CD8-positive, alpha-beta T cell (primary cell): ENCODE measurements at regions of chr2 and their contacts with region 1.

Region 1: GRCh38 chr2:37414470-37414949 is 70.1 kb downstream of the QPCT start:
- DNase-seq: peak in 2 of 9 experiments; percentile 60 to 69
- ATAC-seq: peak; percentile 57
- H3K4me3 ChIP-seq: no peak overlapping the region
- H3K4me3 Mint-ChIP-seq: no peak overlapping the region
- H3K27ac ChIP-seq: no peak overlapping the region
- H3K27ac Mint-ChIP-seq: no peak overlapping the region
- H3K4me1 ChIP-seq: no peaks in the 10 kb centered on the region
- H3K4me1 Mint-ChIP-seq: peaks cover 15% of the 10 kb centered on the region
- H3K27me3 ChIP-seq: no peaks in the 10 kb centered on the region
- H3K27me3 Mint-ChIP-seq: peaks cover 3% of the 10 kb centered on the region
- CTCF ChIP-seq: peak; percentile 94

Region 2: DNA sequence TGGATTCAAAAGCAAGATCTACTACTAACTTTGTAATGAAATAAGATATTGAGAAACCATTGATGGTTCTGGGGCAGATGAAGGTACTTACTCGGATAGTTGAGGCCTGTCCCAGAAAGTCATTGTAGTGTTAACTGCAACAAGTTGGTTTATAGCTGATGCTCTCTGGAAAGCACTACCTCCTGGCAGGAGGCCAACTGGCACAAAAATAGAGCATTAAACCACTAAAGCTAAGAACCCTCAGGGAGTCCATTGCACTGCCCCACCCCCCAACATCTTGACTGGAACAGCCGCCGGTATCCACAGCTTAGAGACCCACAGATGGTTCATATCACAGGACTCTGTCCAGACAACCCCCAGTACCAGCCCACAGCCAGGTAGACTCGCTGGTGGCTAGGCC is 1611.4 kb before region 1 on chr2:
- CTCF ChIA-PET with region 1: no interaction called
- POLR2A ChIA-PET with region 1: no interaction called
- intact Hi-C with region 1: no loop called
- DNase-seq: no peak
- ATAC-seq: no peak
- H3K4me3 ChIP-seq: no peak overlapping the region
- H3K4me3 Mint-ChIP-seq: no peak overlapping the region
- H3K27ac ChIP-seq: no peak overlapping the region
- H3K27ac Mint-ChIP-seq: no peak overlapping the region
- H3K4me1 ChIP-seq: no peaks in the 10 kb centered on the region
- H3K4me1 Mint-ChIP-seq: no peaks in the 10 kb centered on the region
- H3K27me3 ChIP-seq: no peaks in the 10 kb centered on the region
- H3K27me3 Mint-ChIP-seq: peaks cover 2% of the 10 kb centered on the region
- CTCF ChIP-seq: no peak

Region 3: GRCh38 chr2:37529830-37530415 is 115.4 kb after region 1 on chr2:
- CTCF ChIA-PET with region 1: interaction called, 17 read pairs
- POLR2A ChIA-PET with region 1: no interaction called
- intact Hi-C with region 1: no loop called
- DNase-seq: no peak
- ATAC-seq: no peak
- H3K4me3 ChIP-seq: no peak overlapping the region
- H3K4me3 Mint-ChIP-seq: no peak overlapping the region
- H3K27ac ChIP-seq: no peak overlapping the region
- H3K27ac Mint-ChIP-seq: no peak overlapping the region
- H3K4me1 ChIP-seq: no peaks in the 10 kb centered on the region
- H3K4me1 Mint-ChIP-seq: no peaks in the 10 kb centered on the region
- H3K27me3 ChIP-seq: no peaks in the 10 kb centered on the region
- H3K27me3 Mint-ChIP-seq: no peaks in the 10 kb centered on the region
- CTCF ChIP-seq: no peak

Region 4: DNA sequence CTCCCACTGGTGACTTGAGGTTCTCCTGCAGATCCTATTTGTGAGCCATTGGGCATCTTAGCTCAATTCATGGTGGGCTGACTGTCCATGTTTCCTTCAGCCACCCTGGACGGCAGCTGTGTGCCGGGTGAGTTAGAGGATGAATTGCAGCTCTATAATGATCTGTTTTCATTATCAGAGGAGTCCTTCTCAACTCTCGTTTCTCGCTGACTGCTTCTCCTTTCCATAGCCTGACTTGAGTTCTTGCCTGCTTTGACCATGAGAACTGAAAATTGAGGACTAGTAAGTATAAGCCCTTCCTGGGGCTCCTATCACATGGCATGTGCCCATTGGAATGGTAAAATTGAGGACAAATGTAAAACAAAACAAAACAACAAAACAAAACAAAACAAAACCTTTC is 135.1 kb after region 1 on chr2:
- CTCF ChIA-PET with region 1: interaction called, 29 read pairs
- POLR2A ChIA-PET with region 1: interaction called, 3 read pairs
- intact Hi-C with region 1: loop called in 1 of 2 experiments (anchors 10 kb)
- DNase-seq: no peak
- ATAC-seq: no peak
- H3K4me3 ChIP-seq: no peak overlapping the region
- H3K4me3 Mint-ChIP-seq: no peak overlapping the region
- H3K27ac ChIP-seq: no peak overlapping the region
- H3K27ac Mint-ChIP-seq: no peak overlapping the region
- H3K4me1 ChIP-seq: no peaks in the 10 kb centered on the region
- H3K4me1 Mint-ChIP-seq: peaks cover 16% of the 10 kb centered on the region
- H3K27me3 ChIP-seq: no peaks in the 10 kb centered on the region
- H3K27me3 Mint-ChIP-seq: no peaks in the 10 kb centered on the region
- CTCF ChIP-seq: no peak

Region 5: DNA sequence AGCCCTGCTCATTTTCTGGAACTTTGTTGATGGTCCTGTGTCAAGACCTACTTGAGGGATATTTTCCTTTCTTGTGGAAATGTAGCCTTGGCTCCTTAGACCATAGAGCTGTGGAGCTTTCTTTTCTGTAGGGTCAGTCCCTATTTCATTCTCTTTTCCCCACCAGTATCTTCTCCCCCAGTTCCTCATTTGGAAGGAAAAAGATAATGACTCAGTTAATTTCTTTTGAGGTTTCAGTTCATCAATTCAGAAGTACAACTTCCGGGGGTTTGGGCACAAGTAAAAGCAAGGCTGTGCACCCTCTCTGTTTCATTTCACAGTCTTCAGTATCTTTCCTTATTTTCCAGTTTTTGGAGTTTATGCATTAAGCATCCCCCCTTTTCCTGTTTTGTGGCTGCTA is 186.2 kb after region 1 on chr2:
- CTCF ChIA-PET with region 1: interaction called, 17 read pairs
- POLR2A ChIA-PET with region 1: interaction called, 3 read pairs
- intact Hi-C with region 1: no loop called
- DNase-seq: peak in 1 of 9 experiments; percentile 46
- ATAC-seq: no peak
- H3K4me3 ChIP-seq: peak overlapping the region; percentile 42 to 66
- H3K4me3 Mint-ChIP-seq: peak overlapping the region; percentile 90
- H3K27ac ChIP-seq: peak overlapping the region; percentile 65 to 84
- H3K27ac Mint-ChIP-seq: peak overlapping the region; percentile 99
- H3K4me1 ChIP-seq: peaks cover 44% of the 10 kb centered on the region
- H3K4me1 Mint-ChIP-seq: peaks cover 54% of the 10 kb centered on the region
- H3K27me3 ChIP-seq: no peaks in the 10 kb centered on the region
- H3K27me3 Mint-ChIP-seq: no peaks in the 10 kb centered on the region
- CTCF ChIP-seq: no peak

Region 6: DNA sequence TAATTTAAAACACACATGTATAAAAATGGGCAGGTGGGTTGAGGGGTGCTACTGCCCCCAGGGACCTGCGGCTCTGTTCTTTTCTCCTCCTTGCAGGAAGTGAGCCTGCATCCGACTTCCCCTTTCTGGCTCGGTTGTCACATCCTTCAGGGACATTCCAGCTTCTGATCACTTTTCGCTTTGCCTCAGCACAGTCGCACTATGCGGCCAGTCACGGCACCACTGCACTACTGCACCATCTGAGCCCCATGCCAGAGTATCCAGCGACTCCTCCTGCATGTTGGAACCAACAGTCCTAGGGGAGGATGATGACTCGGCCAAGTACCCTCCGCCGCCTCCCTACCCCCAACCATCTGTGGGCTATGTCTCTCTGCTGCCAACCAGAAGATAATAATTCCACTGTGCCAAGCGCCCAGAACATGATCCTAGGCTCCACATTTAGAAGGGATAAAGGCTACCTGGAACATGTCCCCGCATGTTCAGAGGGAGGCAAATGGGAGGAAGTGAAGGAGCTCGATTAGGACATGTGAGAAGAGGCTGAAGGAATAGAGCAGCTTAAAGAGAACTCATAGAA is 239.4 kb after region 1 on chr2:
- CTCF ChIA-PET with region 1: interaction called, 19 read pairs
- POLR2A ChIA-PET with region 1: no interaction called
- intact Hi-C with region 1: loop called in 1 of 2 experiments (anchors 10 kb)
- DNase-seq: peak in 2 of 9 experiments; percentile 53 to 68
- ATAC-seq: no peak
- H3K4me3 ChIP-seq: no peak overlapping the region
- H3K4me3 Mint-ChIP-seq: peak overlapping the region; percentile 53
- H3K27ac ChIP-seq: peak overlapping the region in 1 of 2 experiments; percentile 62
- H3K27ac Mint-ChIP-seq: peak overlapping the region; percentile 95
- H3K4me1 ChIP-seq: peaks cover 85% of the 10 kb centered on the region
- H3K4me1 Mint-ChIP-seq: peaks cover 93% of the 10 kb centered on the region
- H3K27me3 ChIP-seq: no peaks in the 10 kb centered on the region
- H3K27me3 Mint-ChIP-seq: no peaks in the 10 kb centered on the region
- CTCF ChIP-seq: no peak

Region 7: DNA sequence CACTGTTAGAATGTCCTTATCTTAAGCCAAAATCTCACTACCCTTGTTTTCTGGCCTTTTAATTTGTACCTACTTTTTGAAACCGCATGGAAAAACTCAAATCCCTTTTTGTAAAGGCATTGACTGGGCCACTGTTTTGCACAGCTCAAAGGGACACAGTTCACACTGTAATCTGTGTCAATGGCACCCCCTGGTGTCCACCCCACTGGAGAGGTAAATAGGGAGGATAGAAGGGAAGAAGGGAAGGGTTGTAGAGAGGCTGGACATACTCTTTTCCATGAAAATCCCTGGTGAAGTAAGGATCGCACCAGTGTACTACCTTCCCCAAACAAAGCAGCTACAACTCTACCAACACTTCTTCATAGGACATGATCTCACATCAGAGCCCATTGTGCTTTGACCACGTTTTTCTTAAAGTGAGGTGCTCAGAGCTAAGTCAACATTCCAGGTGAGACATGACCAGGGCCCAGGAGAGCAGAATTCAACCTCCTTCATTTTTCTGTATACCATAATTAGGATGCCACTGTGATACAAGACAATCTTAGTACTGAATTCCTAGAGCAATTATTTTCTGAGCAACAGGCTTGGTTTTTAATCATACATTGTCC is 418.2 kb after region 1 on chr2:
- CTCF ChIA-PET with region 1: interaction called, 361 read pairs
- POLR2A ChIA-PET with region 1: interaction called, 9 read pairs
- intact Hi-C with region 1: loop called (anchors 1 kb)
- DNase-seq: peak; percentile 62 to 91 (median 84)
- ATAC-seq: peak; percentile 78
- H3K4me3 ChIP-seq: no peak overlapping the region
- H3K4me3 Mint-ChIP-seq: no peak overlapping the region
- H3K27ac ChIP-seq: no peak overlapping the region
- H3K27ac Mint-ChIP-seq: no peak overlapping the region
- H3K4me1 ChIP-seq: no peaks in the 10 kb centered on the region
- H3K4me1 Mint-ChIP-seq: peaks cover 5% of the 10 kb centered on the region
- H3K27me3 ChIP-seq: no peaks in the 10 kb centered on the region
- H3K27me3 Mint-ChIP-seq: no peaks in the 10 kb centered on the region
- CTCF ChIP-seq: peak; percentile 90

Region 8: GRCh38 chr2:38535744-38536506 is 1121.4 kb after region 1 on chr2:
- CTCF ChIA-PET with region 1: no interaction called
- POLR2A ChIA-PET with region 1: no interaction called
- intact Hi-C with region 1: no loop called
- DNase-seq: peak; percentile 57 to 87 (median 78)
- ATAC-seq: peak; percentile 94
- H3K4me3 ChIP-seq: peak overlapping the region; percentile 47 to 48
- H3K4me3 Mint-ChIP-seq: peak overlapping the region; percentile 57
- H3K27ac ChIP-seq: no peak overlapping the region
- H3K27ac Mint-ChIP-seq: no peak overlapping the region
- H3K4me1 ChIP-seq: peaks cover 7% of the 10 kb centered on the region
- H3K4me1 Mint-ChIP-seq: peaks cover 6% of the 10 kb centered on the region
- H3K27me3 ChIP-seq: no peaks in the 10 kb centered on the region
- H3K27me3 Mint-ChIP-seq: peaks cover 14% of the 10 kb centered on the region
- CTCF ChIP-seq: peak; percentile 88